ENCODE measurements at regions of chr11 and their contacts with region 1.

Region 1: DNA sequence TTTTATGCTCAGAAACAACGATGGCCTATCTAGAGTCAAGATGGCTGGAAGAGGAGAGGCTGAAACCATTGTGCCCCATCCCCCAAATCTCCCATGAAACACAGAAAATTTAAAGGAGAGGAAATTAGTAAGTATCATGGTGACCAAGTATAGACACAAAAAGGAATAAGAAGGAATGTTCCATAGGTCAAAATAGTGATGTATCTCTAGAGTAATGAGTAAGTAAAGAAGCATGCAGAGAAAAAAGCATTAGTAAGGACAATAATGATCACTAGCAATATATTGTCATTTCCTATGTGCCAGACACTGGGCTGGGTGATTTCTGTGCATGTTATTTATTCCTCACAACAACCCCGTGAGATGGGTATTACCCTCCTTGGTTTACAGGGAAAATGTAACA is 2.6 kb upstream of the SLC22A24 start:
- DNase-seq: peak; percentile 40
- H3K4me3 ChIP-seq: no peak overlapping the region
- H3K27ac ChIP-seq: peak overlapping the region; percentile 97
- H3K4me1 ChIP-seq: peaks cover 30% of the 10 kb centered on the region
- H3K27me3 ChIP-seq: no peaks in the 10 kb centered on the region
- CTCF ChIP-seq: no peak
- POLR2A ChIP-seq: no peak

Region 2: DNA sequence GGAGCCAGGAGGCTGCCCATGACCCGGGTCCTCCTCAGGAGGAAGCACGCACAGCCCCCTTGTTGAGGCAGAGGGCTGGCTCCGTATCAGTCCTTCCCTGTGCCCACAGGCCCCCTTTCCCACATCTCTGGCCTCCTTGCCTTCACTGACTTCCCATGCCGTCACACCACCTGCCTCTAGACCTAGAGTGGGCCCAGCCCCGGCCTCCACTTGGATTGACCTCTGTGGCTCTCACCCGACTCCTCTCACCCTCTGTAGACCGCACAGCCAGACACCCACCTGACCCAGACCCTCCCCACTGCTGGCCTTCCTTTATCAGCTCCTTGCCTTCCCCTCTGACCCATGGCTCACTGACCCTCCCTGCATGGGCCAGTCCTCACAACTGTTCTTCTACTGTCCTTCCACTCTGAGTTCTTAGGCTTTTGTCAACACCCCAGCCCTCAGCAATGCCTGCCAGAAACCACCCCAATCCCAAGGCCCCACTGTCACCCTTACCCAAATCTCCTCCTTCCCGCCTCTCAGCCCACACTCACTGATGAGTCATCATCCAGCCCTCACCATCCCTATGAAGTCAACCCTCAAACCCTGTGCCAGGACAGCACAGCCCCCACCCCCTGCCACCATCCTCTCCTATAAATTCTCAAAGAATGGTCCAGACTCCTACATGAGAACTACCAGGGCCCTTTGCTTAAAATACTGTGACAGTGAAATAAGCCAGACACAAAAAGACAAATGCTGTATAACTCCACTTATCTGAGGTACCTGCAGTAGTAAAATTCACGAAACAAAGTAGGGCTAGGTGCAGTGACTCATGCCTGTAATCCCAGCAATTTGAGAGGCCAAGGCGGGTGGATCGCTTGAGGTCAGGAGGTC is 674.3 kb before region 1 on chr11:
- CTCF ChIA-PET with region 1: no interaction called
- POLR2A ChIA-PET with region 1: no interaction called
- dilution Hi-C with region 1: no loop called
- intact Hi-C with region 1: no loop called
- DNase-seq: no peak
- H3K4me3 ChIP-seq: no peak overlapping the region
- H3K27ac ChIP-seq: no peak overlapping the region
- H3K4me1 ChIP-seq: no peaks in the 10 kb centered on the region
- H3K27me3 ChIP-seq: no peaks in the 10 kb centered on the region
- CTCF ChIP-seq: no peak
- POLR2A ChIP-seq: no peak

Region 3: DNA sequence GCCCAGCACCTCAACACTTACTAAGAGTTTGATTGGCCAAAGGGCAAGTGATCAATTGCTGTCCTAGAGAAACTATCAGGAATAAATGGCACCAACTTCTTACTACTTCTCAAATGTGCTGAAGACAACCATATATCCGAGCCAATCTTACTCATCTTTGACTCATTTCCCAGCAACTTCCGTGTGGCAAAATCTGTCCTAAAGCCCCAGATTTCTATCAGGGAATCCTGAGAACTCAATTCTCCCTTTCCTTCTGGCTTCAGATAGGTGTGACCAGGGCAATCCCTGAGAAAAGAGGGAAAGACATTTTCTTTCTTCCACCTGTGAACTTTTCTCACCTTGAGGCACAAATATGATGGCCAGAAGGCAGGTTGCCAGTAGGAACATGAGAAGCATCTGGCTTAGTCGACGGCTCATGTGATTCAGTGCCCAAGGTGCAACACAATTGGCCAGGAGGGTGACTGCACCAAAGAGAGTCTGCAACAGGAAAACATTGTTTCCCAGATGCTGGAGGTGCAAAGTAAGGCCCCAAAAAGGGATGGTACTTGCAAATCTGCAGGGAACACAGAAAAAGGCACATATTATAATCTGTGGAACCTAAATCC is 19.2 kb after region 1 on chr11:
- CTCF ChIA-PET with region 1: no interaction called
- POLR2A ChIA-PET with region 1: no interaction called
- dilution Hi-C with region 1: no loop called
- intact Hi-C with region 1: loop called (anchors 1 kb)
- DNase-seq: peak; percentile 68
- H3K4me3 ChIP-seq: no peak overlapping the region
- H3K27ac ChIP-seq: peak overlapping the region; percentile 77
- H3K4me1 ChIP-seq: peaks cover 16% of the 10 kb centered on the region
- H3K27me3 ChIP-seq: peaks cover 0 to 2% of the 10 kb centered on the region in 2 experiments
- CTCF ChIP-seq: no peak
- POLR2A ChIP-seq: no peak

Region 4: GRCh38 chr11:63212742-63213141 is 66.2 kb after region 1 on chr11:
- CTCF ChIA-PET with region 1: no interaction called
- POLR2A ChIA-PET with region 1: no interaction called
- dilution Hi-C with region 1: no loop called
- intact Hi-C with region 1: loop called (anchors 5 kb)
- DNase-seq: peak; percentile 14
- H3K4me3 ChIP-seq: no peak overlapping the region
- H3K27ac ChIP-seq: no peak overlapping the region
- H3K4me1 ChIP-seq: no peaks in the 10 kb centered on the region
- H3K27me3 ChIP-seq: peaks cover 0 to 2% of the 10 kb centered on the region in 2 experiments
- CTCF ChIP-seq: peak; percentile 34 to 36
- POLR2A ChIP-seq: no peak